ENCODE measurements at regions of chr15 and their contacts with region 1.

Region 1: DNA sequence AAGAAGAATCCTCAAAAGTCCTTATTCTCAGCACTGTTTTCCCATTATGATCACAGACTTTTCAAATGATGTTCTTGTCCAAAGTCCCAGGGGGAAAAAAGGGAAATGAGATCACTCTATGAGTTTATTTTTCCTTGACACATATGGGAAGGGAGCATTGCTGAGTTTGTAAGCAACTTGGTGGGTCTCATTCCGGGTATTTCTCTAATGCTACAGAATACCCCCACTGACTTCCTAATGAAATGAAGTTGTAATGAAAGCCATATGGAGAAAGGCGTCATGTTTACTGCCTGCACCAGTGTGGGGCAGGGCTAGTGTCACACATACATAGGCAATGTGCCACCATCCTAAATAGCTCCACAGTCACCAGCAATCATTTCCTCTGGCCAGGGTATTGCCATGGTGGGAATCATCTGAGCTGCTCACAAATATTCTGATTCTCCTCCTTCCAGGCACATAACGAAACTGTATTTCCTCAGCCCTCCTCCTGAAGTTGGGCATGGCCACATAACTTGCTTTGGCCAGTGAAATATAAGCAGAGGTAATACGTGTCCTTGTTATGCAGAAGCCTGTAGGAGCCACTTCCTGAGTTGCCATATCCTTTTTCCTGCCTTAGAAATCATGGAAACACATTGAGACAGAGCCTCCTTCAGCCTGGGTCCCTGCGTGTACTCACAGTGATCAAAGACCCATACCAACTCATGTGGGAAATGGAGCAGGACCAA is 41.0 kb upstream of the C15orf61 start:
- DNase-seq: no peak
- H3K4me3 ChIP-seq: no peak overlapping the region
- H3K27ac ChIP-seq: no peak overlapping the region
- H3K4me1 ChIP-seq: no peaks in the 10 kb centered on the region
- H3K27me3 ChIP-seq: no peaks in the 10 kb centered on the region
- CTCF ChIP-seq: no peak
- EP300 ChIP-seq: no peak
- POLR2A ChIP-seq: no peak

Region 2: DNA sequence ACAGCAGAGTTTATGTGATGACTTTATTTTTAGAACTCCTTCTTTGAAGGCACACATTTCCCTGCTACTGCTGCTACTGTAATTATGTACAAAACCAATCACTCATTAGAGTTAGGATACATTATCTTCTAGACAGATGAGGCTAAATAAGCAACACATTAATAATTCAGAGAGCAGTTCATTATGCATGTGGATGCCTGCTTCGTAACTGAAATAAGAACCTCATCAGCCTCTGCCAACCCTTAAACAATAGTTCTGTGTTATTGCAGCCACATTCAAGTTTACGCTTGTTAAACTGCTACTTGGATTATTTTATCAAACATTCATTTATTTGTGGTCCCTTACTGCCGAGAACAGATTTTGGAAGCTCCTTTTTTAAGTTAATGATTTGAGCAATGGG is 11.5 kb before region 1 on chr15:
- in situ Hi-C with region 1: no loop called
- intact Hi-C with region 1: loop called (anchors 1 kb)
- DNase-seq: no peak
- H3K4me3 ChIP-seq: no peak overlapping the region
- H3K27ac ChIP-seq: no peak overlapping the region
- H3K4me1 ChIP-seq: no peaks in the 10 kb centered on the region
- H3K27me3 ChIP-seq: no peaks in the 10 kb centered on the region
- CTCF ChIP-seq: no peak
- EP300 ChIP-seq: no peak
- POLR2A ChIP-seq: no peak

Region 3: DNA sequence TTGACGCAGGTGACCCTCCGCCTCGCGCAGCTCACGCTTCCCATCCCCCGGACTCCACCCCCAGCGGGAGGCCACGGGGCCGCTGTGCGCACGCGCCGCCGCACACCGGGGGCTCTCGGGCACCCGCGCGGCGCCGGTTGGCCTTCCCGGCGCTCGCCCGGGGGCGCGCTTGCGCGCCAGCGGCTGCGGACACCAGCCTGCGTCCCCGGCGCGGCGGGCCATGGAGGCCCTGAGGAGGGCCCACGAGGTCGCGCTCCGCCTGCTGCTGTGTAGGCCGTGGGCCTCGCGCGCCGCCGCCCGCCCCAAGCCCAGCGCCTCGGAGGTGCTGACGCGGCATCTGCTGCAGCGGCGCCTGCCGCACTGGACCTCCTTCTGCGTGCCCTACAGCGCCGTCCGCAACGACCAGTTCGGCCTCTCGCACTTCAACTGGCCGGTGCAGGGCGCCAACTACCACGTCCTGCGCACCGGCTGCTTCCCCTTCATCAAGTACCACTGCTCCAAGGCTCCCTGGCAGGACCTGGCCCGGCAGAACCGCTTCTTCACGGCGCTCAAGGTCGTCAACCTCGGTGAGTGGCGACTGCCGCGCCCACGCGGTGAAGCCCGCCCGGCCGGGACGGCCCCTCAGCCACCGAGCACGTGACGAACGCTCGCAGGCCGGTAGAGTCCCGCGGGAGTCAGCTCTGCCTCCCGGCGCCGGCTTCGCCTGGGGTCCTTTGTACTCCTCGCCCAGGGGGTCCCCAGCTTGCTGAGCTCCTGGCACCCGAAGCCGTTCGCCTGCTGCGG is 41.3 kb after region 1 on chr15 and contains the start of gene C15orf61:
- in situ Hi-C with region 1: no loop called
- intact Hi-C with region 1: no loop called
- DNase-seq: peak; percentile 93
- H3K4me3 ChIP-seq: peak within 1 kb of the TSS; percentile 69 to 97 (median 74)
- H3K27ac ChIP-seq: peak within 1 kb of the TSS; percentile 96 to 100 (median 96)
- H3K4me1 ChIP-seq: peaks cover 8 to 26% (median 23%) of the 10 kb centered on the region in 4 donors
- H3K27me3 ChIP-seq: no peaks in the 10 kb centered on the region
- CTCF ChIP-seq: peak in 1 of 5 experiments; percentile 3
- EP300 ChIP-seq: no peak
- POLR2A ChIP-seq: peak; percentile 74
- total RNA-seq, gene C15orf61: 4.0 to 22.4 (median 9.8) TPM

Region 4: GRCh38 chr15:67559158-67559557 is 79.2 kb after region 1 on chr15:
- in situ Hi-C with region 1: no loop called
- intact Hi-C with region 1: no loop called
- DNase-seq: no peak
- H3K4me3 ChIP-seq: no peak overlapping the region
- H3K27ac ChIP-seq: no peak overlapping the region
- H3K4me1 ChIP-seq: no peaks in the 10 kb centered on the region
- H3K27me3 ChIP-seq: no peaks in the 10 kb centered on the region
- CTCF ChIP-seq: no peak
- EP300 ChIP-seq: no peak
- POLR2A ChIP-seq: no peak

Region 5: GRCh38 chr15:68042156-68042854 is 562.4 kb after region 1 on chr15:
- in situ Hi-C with region 1: no loop called
- intact Hi-C with region 1: no loop called
- DNase-seq: no peak
- H3K4me3 ChIP-seq: no peak overlapping the region
- H3K27ac ChIP-seq: peak overlapping the region in 2 of 4 donors; percentile 9 to 33
- H3K4me1 ChIP-seq: peaks cover 0 to 17% (median 2%) of the 10 kb centered on the region in 4 donors
- H3K27me3 ChIP-seq: no peaks in the 10 kb centered on the region
- CTCF ChIP-seq: no peak
- EP300 ChIP-seq: no peak
- POLR2A ChIP-seq: no peak

Region 6: GRCh38 chr15:69074001-69074842 is 1594.3 kb after region 1 on chr15:
- in situ Hi-C with region 1: no loop called
- intact Hi-C with region 1: no loop called
- DNase-seq: peak; percentile 75
- H3K4me3 ChIP-seq: peak overlapping the region; percentile 35 to 59 (median 52)
- H3K27ac ChIP-seq: peak overlapping the region; percentile 55 to 82 (median 82)
- H3K4me1 ChIP-seq: peaks cover 0 to 12% (median 5%) of the 10 kb centered on the region in 4 donors
- H3K27me3 ChIP-seq: no peaks in the 10 kb centered on the region
- CTCF ChIP-seq: peak in 2 of 5 experiments; percentile 21 to 31
- EP300 ChIP-seq: no peak
- POLR2A ChIP-seq: peak; percentile 71

Measured in transverse colon (tissue), 4 donors.